OCI-LY7 (cell line): ENCODE measurements at regions of chr9 and their contacts with region 1.

Region 1: GRCh38 chr9:133485361-133486260 is 6.7 kb upstream of the SLC2A6 start:
- DNase-seq: peak; percentile 84
- H3K4me3 ChIP-seq: peak overlapping the region; percentile 51
- H3K27ac ChIP-seq: peak overlapping the region; percentile 59
- H3K4me1 ChIP-seq: peaks cover 11% of the 10 kb centered on the region
- CTCF ChIP-seq: no peak

Region 2: GRCh38 chr9:133184962-133185361 is 300.6 kb before region 1 on chr9:
- CTCF ChIA-PET with region 1: interaction called, 4 read pairs
- POLR2A ChIA-PET with region 1: no interaction called
- intact Hi-C with region 1: loop called (anchors 1 kb)
- DNase-seq: peak; percentile 54
- H3K4me3 ChIP-seq: no peak overlapping the region
- H3K27ac ChIP-seq: no peak overlapping the region
- H3K4me1 ChIP-seq: no peaks in the 10 kb centered on the region
- CTCF ChIP-seq: peak; percentile 71

Region 3: GRCh38 chr9:133347985-133348717 is 137.5 kb before region 1 on chr9 and contains the starts of genes MED22 and RPL7A:
- CTCF ChIA-PET with region 1: no interaction called
- POLR2A ChIA-PET with region 1: no interaction called
- intact Hi-C with region 1: loop called (anchors 2 kb)
- DNase-seq: peak; percentile 96
- H3K4me3 ChIP-seq: peak within 1 kb of the TSS; percentile 99
- H3K27ac ChIP-seq: peak within 1 kb of the TSS; percentile 87
- H3K4me1 ChIP-seq: peaks cover 35% of the 10 kb centered on the region
- CTCF ChIP-seq: no peak
- total RNA-seq, gene MED22: 39.6 and 62.1 TPM in 2 replicates
- total RNA-seq, gene RPL7A: 2,961 and 2,981 TPM in 2 replicates

Region 4: GRCh38 chr9:133406480-133407307 is 78.9 kb before region 1 on chr9:
- CTCF ChIA-PET with region 1: interaction called, 3 read pairs
- POLR2A ChIA-PET with region 1: no interaction called
- intact Hi-C with region 1: loop called (anchors 1 kb)
- DNase-seq: peak; percentile 79
- H3K4me3 ChIP-seq: no peak overlapping the region
- H3K27ac ChIP-seq: peak overlapping the region; percentile 8
- H3K4me1 ChIP-seq: peaks cover 17% of the 10 kb centered on the region
- CTCF ChIP-seq: peak; percentile 94

Region 5: GRCh38 chr9:133453651-133454050 is 32.0 kb before region 1 on chr9:
- CTCF ChIA-PET with region 1: no interaction called
- POLR2A ChIA-PET with region 1: no interaction called
- intact Hi-C with region 1: loop called (anchors 2 kb)
- DNase-seq: no peak
- H3K4me3 ChIP-seq: no peak overlapping the region
- H3K27ac ChIP-seq: no peak overlapping the region
- H3K4me1 ChIP-seq: peaks cover 42% of the 10 kb centered on the region
- CTCF ChIP-seq: no peak

Region 6: GRCh38 chr9:133505901-133506652 is 20.5 kb after region 1 on chr9:
- CTCF ChIA-PET with region 1: no interaction called
- POLR2A ChIA-PET with region 1: no interaction called
- intact Hi-C with region 1: no loop called
- DNase-seq: no peak
- H3K4me3 ChIP-seq: no peak overlapping the region
- H3K27ac ChIP-seq: no peak overlapping the region
- H3K4me1 ChIP-seq: no peaks in the 10 kb centered on the region
- CTCF ChIP-seq: no peak